ENCODE measurements at regions of chr11 and their contacts with region 1.

Region 1: GRCh38 chr11:125164422-125165110 is at the start of gene PKNOX2:
- DNase-seq: no peak
- H3K4me3 ChIP-seq: peak within 1 kb of the TSS; percentile 42 to 72 (median 61)
- H3K27ac ChIP-seq: peak within 1 kb of the TSS; percentile 60 to 90 (median 84)
- H3K4me1 ChIP-seq: peaks cover 15 to 60% (median 27%) of the 10 kb centered on the region in 3 donors
- H3K27me3 ChIP-seq: peaks cover 0 to 54% (median 2%) of the 10 kb centered on the region in 4 donors
- CTCF ChIP-seq: peak in 4 of 6 experiments; percentile 10 to 65 (median 30)
- POLR2A ChIP-seq: peak in 2 of 4 donors; percentile 23 to 27
- total RNA-seq, gene PKNOX2: 0.40 to 5.9 (median 1.1) TPM in 3 of 4 donors, not detected in the other

Region 2: GRCh38 chr11:125345421-125346178 is 181.0 kb after region 1 on chr11:
- intact Hi-C with region 1: loop called (anchors 5 kb)
- DNase-seq: peak; percentile 1
- H3K4me3 ChIP-seq: no peak overlapping the region
- H3K27ac ChIP-seq: peak overlapping the region in 2 of 4 donors; percentile 26 to 36
- H3K4me1 ChIP-seq: peaks cover 0 to 21% (median 5%) of the 10 kb centered on the region in 3 donors
- H3K27me3 ChIP-seq: peaks cover 0 to 13% (median 0%) of the 10 kb centered on the region in 4 donors
- CTCF ChIP-seq: peak; percentile 52 to 88 (median 78)
- POLR2A ChIP-seq: no peak